ENCODE measurements at regions of chr15 and their contacts with region 1.

Region 1: GRCh38 chr15:58182460-58183163 is 44.4 kb downstream of the AQP9 start:
- DNase-seq: peak; percentile 37
- ATAC-seq: peak; percentile 98
- H3K4me3 ChIP-seq: no peak overlapping the region
- H3K27ac ChIP-seq: no peak overlapping the region
- H3K4me1 ChIP-seq: no peaks in the 10 kb centered on the region
- H3K27me3 ChIP-seq: no peaks in the 10 kb centered on the region; a peak in 1 of 5 replicates
- CTCF ChIP-seq: peak; percentile 96
- EP300 ChIP-seq: no peak; a peak in 1 of 4 replicates
- POLR2A ChIP-seq: no peak
- RAD21 ChIP-seq: peak; percentile 94

Region 2: DNA sequence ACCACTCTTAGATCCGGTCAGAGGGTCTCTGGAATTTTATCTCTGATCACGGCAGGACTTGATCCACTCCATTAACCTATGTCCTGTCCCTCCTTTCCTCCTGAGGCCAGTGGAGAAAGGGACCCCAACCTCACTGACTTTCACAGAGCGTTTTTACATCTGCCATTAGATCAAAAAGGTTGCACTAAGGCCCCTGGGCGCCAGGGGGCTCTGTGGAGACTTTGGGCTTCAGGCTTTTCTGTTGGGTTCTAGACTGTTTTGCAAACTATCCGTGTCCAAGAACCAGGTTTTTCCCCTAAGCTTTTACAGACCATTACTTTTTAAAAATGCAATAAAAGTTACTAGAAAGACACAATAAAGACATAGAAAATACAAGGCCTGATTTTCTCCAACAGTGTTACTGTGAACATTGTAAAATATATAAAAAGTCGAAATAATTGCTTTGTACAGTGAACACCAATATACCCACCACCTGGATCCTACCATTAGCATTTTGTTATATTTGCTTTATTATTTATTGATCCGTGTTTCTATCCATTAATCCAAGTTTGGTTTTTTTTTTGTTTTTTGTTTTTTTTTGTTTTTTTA is 316.4 kb before region 1 on chr15:
- CTCF ChIA-PET with region 1: interaction called, 4 read pairs
- POLR2A ChIA-PET with region 1: no interaction called
- in situ Hi-C with region 1: loop called (anchors 10 kb)
- intact Hi-C with region 1: loop called (anchors 2 kb)
- DNase-seq: peak; percentile 56
- ATAC-seq: peak; percentile 67
- H3K4me3 ChIP-seq: no peak overlapping the region
- H3K27ac ChIP-seq: no peak overlapping the region
- H3K4me1 ChIP-seq: no peaks in the 10 kb centered on the region
- H3K27me3 ChIP-seq: peaks cover 0 to 1% of the 10 kb centered on the region in 2 experiments; a peak in 1 of 5 replicates
- CTCF ChIP-seq: peak; percentile 68
- EP300 ChIP-seq: no peak
- POLR2A ChIP-seq: no peak
- RAD21 ChIP-seq: no peak

Region 3: DNA sequence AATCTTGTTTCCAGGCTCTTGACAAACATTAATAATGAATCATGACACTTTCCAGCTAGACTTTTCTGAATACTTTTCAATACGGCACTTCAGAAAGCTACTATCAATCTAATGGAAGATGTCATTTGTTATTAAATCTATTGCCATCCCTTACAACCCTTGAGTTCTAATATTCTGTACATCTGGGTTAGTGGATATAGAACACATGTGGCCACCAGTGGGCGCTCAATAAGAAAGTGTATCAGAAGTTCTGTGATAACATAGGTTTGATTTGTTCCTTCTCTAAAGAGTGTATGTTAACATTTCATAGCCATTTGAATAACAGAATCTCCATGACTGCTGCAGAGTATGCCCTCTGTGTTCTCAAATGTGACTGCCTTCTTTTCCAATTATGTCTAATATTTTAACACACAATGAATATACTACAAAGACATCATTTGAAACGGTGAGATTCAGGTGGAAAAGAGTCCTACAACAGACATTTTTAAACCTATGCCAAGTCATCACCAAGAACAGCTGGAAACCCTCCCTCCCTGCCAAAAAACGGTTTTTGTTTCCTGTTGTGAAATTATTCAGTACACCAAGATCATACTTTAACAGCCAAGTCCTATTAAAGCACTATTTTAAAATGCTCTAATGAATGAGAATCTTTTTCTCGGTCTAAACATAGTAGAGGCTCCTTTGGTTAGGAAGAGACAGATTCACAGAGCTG is 139.3 kb before region 1 on chr15:
- CTCF ChIA-PET with region 1: interaction called, 11 read pairs
- POLR2A ChIA-PET with region 1: no interaction called
- in situ Hi-C with region 1: no loop called
- intact Hi-C with region 1: loop called (anchors 1 kb)
- DNase-seq: peak; percentile 27
- ATAC-seq: peak; percentile 56; the same call in 2 of the 3 replicates
- H3K4me3 ChIP-seq: no peak overlapping the region
- H3K27ac ChIP-seq: no peak overlapping the region
- H3K4me1 ChIP-seq: no peaks in the 10 kb centered on the region
- H3K27me3 ChIP-seq: no peaks in the 10 kb centered on the region
- CTCF ChIP-seq: peak; percentile 59
- EP300 ChIP-seq: no peak
- POLR2A ChIP-seq: no peak
- RAD21 ChIP-seq: no peak

Region 4: DNA sequence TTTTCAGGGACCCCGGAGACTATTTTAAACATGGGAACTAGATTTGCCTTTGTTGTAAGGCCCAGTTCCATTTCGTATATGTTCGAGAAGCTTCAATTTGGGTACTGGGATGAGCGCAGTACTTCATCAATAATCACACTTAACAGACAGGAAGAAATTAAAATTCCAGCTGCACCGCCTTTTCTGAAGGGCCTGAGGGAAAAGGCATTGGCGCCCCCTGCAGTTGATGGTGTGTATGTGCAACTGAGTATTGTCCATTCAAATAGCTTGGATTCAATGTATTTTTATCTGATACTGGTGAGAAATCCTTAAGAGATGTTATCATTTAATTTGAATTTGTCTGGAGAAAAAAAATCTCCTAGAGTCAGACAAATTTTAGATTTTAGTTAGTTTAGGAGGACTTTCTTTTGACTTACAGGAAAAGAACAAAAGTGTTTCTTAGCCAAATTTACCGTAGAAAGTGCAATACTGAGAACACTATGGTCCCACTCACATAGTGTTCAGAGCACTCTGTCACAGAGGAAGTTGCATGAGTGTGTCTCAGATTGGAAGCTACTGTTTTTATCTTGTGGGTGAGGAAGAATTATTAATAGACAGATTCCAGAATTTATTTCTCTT is 111.7 kb before region 1 on chr15:
- CTCF ChIA-PET with region 1: interaction called, 5 read pairs
- POLR2A ChIA-PET with region 1: no interaction called
- in situ Hi-C with region 1: loop called (anchors 10 kb)
- intact Hi-C with region 1: no loop called
- DNase-seq: peak; percentile 40
- ATAC-seq: no peak
- H3K4me3 ChIP-seq: no peak overlapping the region
- H3K27ac ChIP-seq: no peak overlapping the region
- H3K4me1 ChIP-seq: peaks cover 5% of the 10 kb centered on the region; the same call in 1 of the 2 replicates
- H3K27me3 ChIP-seq: peaks cover 0 to 12% of the 10 kb centered on the region in 2 experiments; a peak in 2 of 5 replicates
- CTCF ChIP-seq: peak; percentile 76
- EP300 ChIP-seq: no peak
- POLR2A ChIP-seq: no peak
- RAD21 ChIP-seq: no peak

Region 5: GRCh38 chr15:58077427-58077826 is 105.2 kb before region 1 on chr15:
- CTCF ChIA-PET with region 1: interaction called, 20 read pairs
- POLR2A ChIA-PET with region 1: no interaction called
- in situ Hi-C with region 1: no loop called
- intact Hi-C with region 1: loop called (anchors 1 kb)
- DNase-seq: peak; percentile 12
- ATAC-seq: peak; percentile 79
- H3K4me3 ChIP-seq: no peak overlapping the region
- H3K27ac ChIP-seq: no peak overlapping the region
- H3K4me1 ChIP-seq: no peaks in the 10 kb centered on the region
- H3K27me3 ChIP-seq: no peaks in the 10 kb centered on the region
- CTCF ChIP-seq: peak; percentile 75
- EP300 ChIP-seq: no peak
- POLR2A ChIP-seq: no peak
- RAD21 ChIP-seq: 0 out of 2 replicates have a peak, but pooled peaks have one; percentile 25

Region 6: GRCh38 chr15:58115692-58116091 is 66.9 kb before region 1 on chr15:
- CTCF ChIA-PET with region 1: interaction called, 10 read pairs
- POLR2A ChIA-PET with region 1: no interaction called
- in situ Hi-C with region 1: loop called (anchors 10 kb)
- intact Hi-C with region 1: loop called (anchors 1 kb)
- DNase-seq: peak; percentile 9
- ATAC-seq: peak; percentile 66
- H3K4me3 ChIP-seq: no peak overlapping the region
- H3K27ac ChIP-seq: no peak overlapping the region
- H3K4me1 ChIP-seq: peaks cover 53% of the 10 kb centered on the region
- H3K27me3 ChIP-seq: no peaks in the 10 kb centered on the region
- CTCF ChIP-seq: peak; percentile 69
- EP300 ChIP-seq: no peak
- POLR2A ChIP-seq: no peak
- RAD21 ChIP-seq: 0 out of 2 replicates have a peak, but pooled peaks have one; percentile 25

Region 7: DNA sequence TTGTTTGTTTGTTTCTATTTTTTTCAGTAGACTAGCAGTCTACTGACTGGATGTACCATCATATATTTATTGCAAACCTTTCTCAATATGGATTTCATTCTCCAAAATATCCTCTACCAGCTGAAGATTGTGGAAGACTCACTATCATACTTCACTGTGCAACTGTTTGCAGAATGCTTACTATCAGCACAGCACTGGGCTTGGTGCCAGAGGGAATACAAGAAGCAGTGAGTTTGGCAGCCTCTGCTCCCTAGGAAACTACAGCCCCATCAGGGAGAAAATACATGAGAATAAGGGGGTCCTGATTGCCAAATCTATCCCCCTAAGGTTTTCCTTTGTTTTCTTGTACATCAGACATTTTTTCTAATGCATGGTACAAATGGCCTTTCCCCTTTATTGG is 17.0 kb before region 1 on chr15:
- CTCF ChIA-PET with region 1: no interaction called
- POLR2A ChIA-PET with region 1: no interaction called
- in situ Hi-C with region 1: no loop called
- intact Hi-C with region 1: no loop called
- DNase-seq: peak; percentile 5
- ATAC-seq: peak; percentile 65; the same call in 1 of the 3 replicates
- H3K4me3 ChIP-seq: no peak overlapping the region
- H3K27ac ChIP-seq: no peak overlapping the region
- H3K4me1 ChIP-seq: peaks cover 38% of the 10 kb centered on the region
- H3K27me3 ChIP-seq: 0 out of 5 replicates have a peak, but pooled peaks cover 0 to 3% of the 10 kb centered on the region in 2 experiments
- CTCF ChIP-seq: no peak
- EP300 ChIP-seq: no peak
- POLR2A ChIP-seq: no peak
- RAD21 ChIP-seq: no peak

Region 8: GRCh38 chr15:58247855-58248766 is 65.5 kb after region 1 on chr15:
- CTCF ChIA-PET with region 1: no interaction called
- POLR2A ChIA-PET with region 1: no interaction called
- in situ Hi-C with region 1: no loop called
- intact Hi-C with region 1: no loop called
- DNase-seq: no peak
- ATAC-seq: peak; percentile 47; the same call in 1 of the 3 replicates
- H3K4me3 ChIP-seq: no peak overlapping the region
- H3K27ac ChIP-seq: no peak overlapping the region
- H3K4me1 ChIP-seq: no peaks in the 10 kb centered on the region
- H3K27me3 ChIP-seq: no peaks in the 10 kb centered on the region
- CTCF ChIP-seq: no peak
- EP300 ChIP-seq: no peak
- POLR2A ChIP-seq: no peak
- RAD21 ChIP-seq: no peak

Region 9: GRCh38 chr15:58632789-58633188 is 450.2 kb after region 1 on chr15:
- CTCF ChIA-PET with region 1: no interaction called
- POLR2A ChIA-PET with region 1: no interaction called
- in situ Hi-C with region 1: no loop called
- intact Hi-C with region 1: no loop called
- DNase-seq: no peak
- ATAC-seq: no peak
- H3K4me3 ChIP-seq: no peak overlapping the region
- H3K27ac ChIP-seq: no peak overlapping the region
- H3K4me1 ChIP-seq: 0 out of 2 replicates have a peak, but pooled peaks cover 2% of the 10 kb centered on the region
- H3K27me3 ChIP-seq: no peaks in the 10 kb centered on the region; a peak in 1 of 5 replicates
- CTCF ChIP-seq: no peak
- EP300 ChIP-seq: no peak
- POLR2A ChIP-seq: no peak
- RAD21 ChIP-seq: no peak

Measured in HepG2 (cell line).